Prostate gland (tissue), 2 donors: ENCODE measurements at regions of chr2 and their contacts with region 1.

Region 1: GRCh38 chr2:191869178-191869577 is 22.3 kb upstream of the CAVIN2 start:
- DNase-seq: no peak
- H3K4me3 ChIP-seq: no peak overlapping the region
- H3K27ac ChIP-seq: no peak overlapping the region
- H3K4me1 ChIP-seq: no peaks in the 10 kb centered on the region
- H3K27me3 ChIP-seq: no peaks in the 10 kb centered on the region
- CTCF ChIP-seq: peak in 1 of 4 experiments; percentile 16
- POLR2A ChIP-seq: no peak

Region 2: GRCh38 chr2:191679818-191680600 is 189.2 kb before region 1 on chr2:
- intact Hi-C with region 1: loop called (anchors 10 kb)
- DNase-seq: no peak
- H3K4me3 ChIP-seq: no peak overlapping the region
- H3K27ac ChIP-seq: no peak overlapping the region
- H3K4me1 ChIP-seq: no peaks in the 10 kb centered on the region
- H3K27me3 ChIP-seq: no peaks in the 10 kb centered on the region
- CTCF ChIP-seq: no peak
- POLR2A ChIP-seq: no peak

Region 3: DNA sequence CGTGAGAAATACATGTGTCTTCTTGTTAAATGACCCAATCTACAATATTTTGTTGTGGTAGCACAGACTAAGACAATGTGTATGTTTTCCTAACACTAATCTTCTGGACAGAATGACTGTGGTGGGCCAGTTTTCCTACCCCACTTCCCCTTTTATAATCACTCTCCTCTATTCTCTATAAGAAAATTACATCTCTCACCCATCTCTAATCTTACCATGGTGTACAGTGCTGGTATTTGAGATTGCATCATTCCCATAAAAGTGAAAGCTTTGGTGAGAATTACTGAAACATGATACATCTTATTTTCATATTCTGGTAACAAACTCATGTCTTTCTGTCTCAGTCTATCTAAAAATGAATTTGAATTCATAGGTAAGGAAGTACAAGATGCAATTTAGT is 62.8 kb before region 1 on chr2:
- intact Hi-C with region 1: no loop called
- DNase-seq: no peak
- H3K4me3 ChIP-seq: no peak overlapping the region
- H3K27ac ChIP-seq: no peak overlapping the region
- H3K4me1 ChIP-seq: no peaks in the 10 kb centered on the region
- H3K27me3 ChIP-seq: no peaks in the 10 kb centered on the region
- CTCF ChIP-seq: no peak
- POLR2A ChIP-seq: no peak

Region 4: GRCh38 chr2:191846515-191847476 is 22.4 kb before region 1 on chr2 and contains the start of gene CAVIN2:
- intact Hi-C with region 1: loop called (anchors 2 kb)
- DNase-seq: peak; percentile 48
- H3K4me3 ChIP-seq: peak within 1 kb of the TSS; percentile 24 to 26
- H3K27ac ChIP-seq: peak within 1 kb of the TSS; percentile 57 to 70
- H3K4me1 ChIP-seq: no peaks in the 10 kb centered on the region
- H3K27me3 ChIP-seq: no peaks in the 10 kb centered on the region
- CTCF ChIP-seq: no peak
- POLR2A ChIP-seq: no peak
- total RNA-seq, gene CAVIN2: 24.8 to 27.1 TPM

Region 5: GRCh38 chr2:192236136-192236535 is 367.0 kb after region 1 on chr2:
- intact Hi-C with region 1: no loop called
- DNase-seq: no peak
- H3K4me3 ChIP-seq: no peak overlapping the region
- H3K27ac ChIP-seq: no peak overlapping the region
- H3K4me1 ChIP-seq: no peaks in the 10 kb centered on the region
- H3K27me3 ChIP-seq: no peaks in the 10 kb centered on the region
- CTCF ChIP-seq: no peak
- POLR2A ChIP-seq: no peak